Activated T-helper 2 cell treated with anti-CD3 and anti-CD28 coated beads, Interferon-gamma antibody, Interleukin-2, Interleukin-4, amounts not matched to agents 10 μg/mL and 5 μg/mL and 100 μg/mL, durations not matched to agents 14 hours and 24 hours and 36 hours (primary cell): ENCODE measurements at regions of chr1 and their contacts with region 1.

Region 1: GRCh38 chr1:221708987-221709386 is 32.9 kb downstream of the DUSP10 start:
- DNase-seq: peak; percentile 41
- H3K4me3 Mint-ChIP-seq: peak overlapping the region; percentile 33
- H3K27ac Mint-ChIP-seq: peak overlapping the region; percentile 98
- H3K4me1 Mint-ChIP-seq: peaks cover 65% of the 10 kb centered on the region
- H3K27me3 Mint-ChIP-seq: no peaks in the 10 kb centered on the region

Region 2: DNA sequence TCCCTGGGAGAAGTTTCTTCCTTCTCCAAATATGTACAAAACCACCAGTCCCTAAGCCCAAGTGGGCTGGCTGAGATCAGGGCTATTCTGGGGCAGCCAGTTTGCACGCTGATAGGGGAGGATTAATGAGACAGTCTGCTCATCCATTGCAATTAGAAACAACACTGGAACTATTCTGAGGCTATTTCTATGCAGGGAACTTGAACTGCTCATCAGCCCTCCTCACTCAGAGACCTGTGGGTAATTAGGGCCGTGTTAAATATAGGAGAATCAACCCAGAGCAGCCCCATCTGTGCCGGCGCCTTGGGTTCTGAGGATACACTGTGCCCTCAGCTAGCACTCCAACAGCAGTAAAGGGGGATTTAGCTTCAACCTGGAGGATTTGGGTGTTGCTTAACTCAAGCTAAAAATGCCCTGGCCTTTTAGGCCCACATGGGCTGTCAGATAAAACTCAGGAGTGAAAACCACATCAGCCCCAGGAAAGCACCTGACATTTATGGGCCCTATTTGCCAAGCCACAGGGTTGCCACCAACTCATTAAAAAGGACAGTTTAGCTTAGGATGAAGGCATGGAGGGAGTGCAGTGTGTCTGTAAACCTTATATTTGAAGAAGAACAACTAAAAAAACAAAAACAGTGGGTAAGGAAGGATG is 21.0 kb before region 1 on chr1:
- intact Hi-C with region 1: loop called (anchors 1 kb)
- DNase-seq: no peak
- H3K4me3 Mint-ChIP-seq: peak overlapping the region; percentile 20
- H3K27ac Mint-ChIP-seq: peak overlapping the region; percentile 71
- H3K4me1 Mint-ChIP-seq: peaks cover 43% of the 10 kb centered on the region
- H3K27me3 Mint-ChIP-seq: no peaks in the 10 kb centered on the region

Region 3: DNA sequence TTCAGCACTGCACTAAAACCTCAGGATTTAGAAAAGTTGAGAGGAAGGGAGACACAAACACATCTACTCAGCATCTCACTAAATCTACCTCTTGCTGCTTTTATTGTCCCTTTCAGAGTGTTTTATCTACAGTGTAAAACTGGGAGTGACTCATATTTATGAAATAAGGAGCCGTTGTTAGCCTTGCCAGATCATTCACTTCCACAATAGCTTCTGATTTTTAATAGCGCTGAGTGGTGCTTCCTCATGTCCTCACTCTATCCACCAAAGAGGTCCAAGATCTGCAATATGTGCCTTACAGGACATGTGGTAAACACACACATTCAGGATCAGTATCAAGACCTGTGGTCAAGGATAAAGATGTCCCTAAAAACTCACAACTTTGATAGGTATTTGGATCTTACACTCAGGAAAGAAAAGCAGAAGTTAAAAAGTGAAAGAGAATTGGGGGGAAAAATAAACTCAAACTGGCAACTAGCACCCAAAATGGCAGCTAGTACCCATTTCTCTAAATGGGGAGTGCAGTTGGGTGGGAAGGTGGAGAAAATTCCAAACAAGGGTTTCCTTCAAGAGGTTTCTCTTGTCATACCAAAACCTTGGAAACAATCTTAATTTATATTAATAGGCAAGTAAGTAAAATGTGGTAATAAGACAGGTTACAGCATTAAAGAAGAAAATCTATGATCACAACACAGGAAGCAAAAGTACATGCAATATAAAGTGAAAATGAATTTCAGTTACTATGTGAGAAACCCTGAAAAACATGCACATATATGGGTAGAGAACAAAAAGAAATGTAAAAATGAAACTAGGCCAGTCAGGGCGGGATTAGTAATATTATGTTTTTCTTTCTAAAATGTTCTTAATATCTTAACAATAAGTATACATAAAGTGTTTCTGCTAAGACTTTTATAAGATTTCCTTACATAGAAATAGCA is 17.0 kb after region 1 on chr1:
- intact Hi-C with region 1: loop called (anchors 1 kb)
- DNase-seq: no peak
- H3K4me3 Mint-ChIP-seq: peak overlapping the region; percentile 69
- H3K27ac Mint-ChIP-seq: peak overlapping the region; percentile 95
- H3K4me1 Mint-ChIP-seq: peaks cover 84% of the 10 kb centered on the region
- H3K27me3 Mint-ChIP-seq: no peaks in the 10 kb centered on the region

Region 4: DNA sequence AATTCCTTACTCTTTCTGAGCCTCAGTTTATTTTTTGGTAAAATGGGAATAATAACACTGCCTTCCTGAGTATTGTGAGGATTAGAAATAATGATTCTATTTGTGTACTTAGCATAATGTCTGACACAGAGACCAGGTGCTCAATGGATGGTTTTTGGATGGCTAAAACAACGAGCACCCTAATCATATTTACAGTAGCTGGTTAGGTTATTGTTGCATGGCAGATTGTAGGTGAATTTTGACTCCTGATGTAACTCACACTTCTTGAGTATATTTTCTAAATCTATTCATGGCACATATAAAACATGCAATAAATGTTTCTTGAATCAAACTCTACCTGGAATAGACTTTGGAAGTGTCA is 44.8 kb after region 1 on chr1:
- intact Hi-C with region 1: loop called (anchors 1 kb)
- DNase-seq: no peak
- H3K4me3 Mint-ChIP-seq: peak overlapping the region; percentile 28
- H3K27ac Mint-ChIP-seq: peak overlapping the region; percentile 81
- H3K4me1 Mint-ChIP-seq: peaks cover 50% of the 10 kb centered on the region
- H3K27me3 Mint-ChIP-seq: no peaks in the 10 kb centered on the region

Region 5: GRCh38 chr1:221809031-221810029 is 100.3 kb after region 1 on chr1:
- intact Hi-C with region 1: loop called (anchors 1 kb)
- DNase-seq: no peak
- H3K4me3 Mint-ChIP-seq: no peak overlapping the region
- H3K27ac Mint-ChIP-seq: peak overlapping the region; percentile 81
- H3K4me1 Mint-ChIP-seq: peaks cover 43% of the 10 kb centered on the region
- H3K27me3 Mint-ChIP-seq: peaks cover 4% of the 10 kb centered on the region

Region 6: GRCh38 chr1:221829327-221830015 is 120.5 kb after region 1 on chr1:
- intact Hi-C with region 1: loop called (anchors 1 kb)
- DNase-seq: peak; percentile 40
- H3K4me3 Mint-ChIP-seq: peak overlapping the region; percentile 67
- H3K27ac Mint-ChIP-seq: peak overlapping the region; percentile 97
- H3K4me1 Mint-ChIP-seq: peaks cover 70% of the 10 kb centered on the region
- H3K27me3 Mint-ChIP-seq: no peaks in the 10 kb centered on the region

Region 7: DNA sequence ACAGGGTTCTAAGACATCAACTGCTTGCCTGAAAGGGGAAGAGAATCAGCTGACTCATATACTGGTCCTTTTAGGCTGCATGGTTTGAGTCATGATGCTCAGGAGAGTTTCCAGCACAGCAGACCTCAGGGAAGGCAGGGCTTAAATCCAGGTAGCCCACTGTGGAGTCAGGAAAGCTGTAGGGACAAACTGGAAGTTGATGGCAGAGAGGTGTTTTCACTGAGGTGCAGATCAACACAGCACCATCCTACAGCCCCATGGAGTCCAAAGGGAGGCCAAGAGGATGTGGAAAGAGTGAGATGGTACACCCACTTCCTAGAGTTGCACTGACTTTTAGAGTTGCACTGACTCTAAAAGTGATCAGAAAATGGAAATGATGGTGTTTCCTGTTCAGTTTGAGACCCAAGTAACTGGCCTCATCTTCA is 285.3 kb after region 1 on chr1:
- intact Hi-C with region 1: loop called (anchors 1 kb)
- DNase-seq: peak; percentile 8
- H3K4me3 Mint-ChIP-seq: no peak overlapping the region
- H3K27ac Mint-ChIP-seq: peak overlapping the region; percentile 96
- H3K4me1 Mint-ChIP-seq: peaks cover 45% of the 10 kb centered on the region
- H3K27me3 Mint-ChIP-seq: no peaks in the 10 kb centered on the region